ENCODE measurements at regions of chr22 and their contacts with region 1.

Region 1: GRCh38 chr22:45268958-45269844 is 15.5 kb upstream of the UPK3A start:
- DNase-seq: peak; percentile 92
- ATAC-seq: peak; percentile 98
- H3K4me3 ChIP-seq: peak overlapping the region; percentile 59 to 79 (median 66)
- H3K4me3 Mint-ChIP-seq: peak overlapping the region; percentile 89
- H3K27ac ChIP-seq: no peak overlapping the region
- H3K27ac Mint-ChIP-seq: peak overlapping the region; percentile 37
- H3K4me1 ChIP-seq: peaks cover 13 to 24% of the 10 kb centered on the region in 2 donors
- H3K4me1 Mint-ChIP-seq: peaks cover 24% of the 10 kb centered on the region
- H3K27me3 ChIP-seq: peaks cover 0 to 16% (median 7%) of the 10 kb centered on the region in 4 experiments
- H3K27me3 Mint-ChIP-seq: peaks cover 10% of the 10 kb centered on the region
- CTCF ChIP-seq: peak; percentile 82

Region 2: GRCh38 chr22:45163451-45164269 is 105.5 kb before region 1 on chr22 and contains the start of gene NUP50:
- CTCF ChIA-PET with region 1: no interaction called
- POLR2A ChIA-PET with region 1: interaction called, 3 read pairs
- intact Hi-C with region 1: loop called (anchors 5 kb)
- DNase-seq: peak; percentile 99
- ATAC-seq: peak; percentile 79
- H3K4me3 ChIP-seq: peak within 1 kb of the TSS; percentile 76 to 89 (median 82)
- H3K4me3 Mint-ChIP-seq: peak within 1 kb of the TSS; percentile 92
- H3K27ac ChIP-seq: peak within 1 kb of the TSS; percentile 81 to 94
- H3K27ac Mint-ChIP-seq: peak within 1 kb of the TSS; percentile 94
- H3K4me1 ChIP-seq: peaks cover 19 to 23% of the 10 kb centered on the region in 2 donors
- H3K4me1 Mint-ChIP-seq: peaks cover 47% of the 10 kb centered on the region
- H3K27me3 ChIP-seq: no peaks in the 10 kb centered on the region
- H3K27me3 Mint-ChIP-seq: no peaks in the 10 kb centered on the region
- CTCF ChIP-seq: no peak
- total RNA-seq, gene NUP50: 105 and 108 TPM in 2 replicates

Region 3: DNA sequence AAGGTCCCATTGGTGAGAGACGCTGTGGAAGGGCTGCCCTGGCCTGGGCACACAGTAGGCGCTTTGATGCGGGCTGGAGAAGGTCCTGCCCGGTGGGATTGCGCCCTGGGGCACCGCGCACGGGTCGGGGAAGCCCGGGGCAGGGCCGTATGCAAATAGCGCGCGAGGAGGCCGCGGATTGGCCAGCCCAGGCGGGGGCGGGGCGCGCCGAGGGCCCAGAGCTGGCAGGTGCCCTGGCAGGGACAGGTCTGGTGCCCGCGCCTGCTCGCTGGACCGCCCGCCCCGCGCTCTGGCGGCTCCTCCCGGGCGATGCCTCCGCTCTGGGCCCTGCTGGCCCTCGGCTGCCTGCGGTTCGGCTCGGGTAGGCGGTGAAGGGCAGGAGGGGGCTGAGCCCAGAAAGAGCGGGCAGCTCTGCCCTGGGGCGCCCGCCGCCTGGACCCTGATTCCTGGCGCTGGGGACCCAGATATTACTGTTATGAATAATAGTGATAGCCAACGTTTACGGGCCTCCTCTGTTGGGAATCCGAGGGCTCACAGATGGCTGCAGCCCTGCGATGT is 15.6 kb after region 1 on chr22 and contains the start of gene UPK3A:
- CTCF ChIA-PET with region 1: interaction called, 3 read pairs
- POLR2A ChIA-PET with region 1: interaction called, 4 read pairs
- intact Hi-C with region 1: loop called (anchors 1 kb)
- DNase-seq: peak; percentile 85
- ATAC-seq: peak; percentile 90
- H3K4me3 ChIP-seq: peak within 1 kb of the TSS; percentile 15 to 45 (median 31)
- H3K4me3 Mint-ChIP-seq: peak within 1 kb of the TSS; percentile 59
- H3K27ac ChIP-seq: no peak within 1 kb of the TSS
- H3K27ac Mint-ChIP-seq: peak within 1 kb of the TSS; percentile 53
- H3K4me1 ChIP-seq: peaks cover 40 to 56% of the 10 kb centered on the region in 2 donors
- H3K4me1 Mint-ChIP-seq: peaks cover 41% of the 10 kb centered on the region
- H3K27me3 ChIP-seq: no peaks in the 10 kb centered on the region
- H3K27me3 Mint-ChIP-seq: no peaks in the 10 kb centered on the region
- CTCF ChIP-seq: no peak
- total RNA-seq, gene UPK3A: not detected in 2 replicates

Region 4: GRCh38 chr22:45309472-45310227 is 40.4 kb after region 1 on chr22 and contains the start of gene FAM118A:
- CTCF ChIA-PET with region 1: no interaction called
- POLR2A ChIA-PET with region 1: interaction called, 6 read pairs
- intact Hi-C with region 1: loop called (anchors 1 kb)
- DNase-seq: peak; percentile 99
- ATAC-seq: peak; percentile 88
- H3K4me3 ChIP-seq: peak within 1 kb of the TSS; percentile 27 to 95 (median 80)
- H3K4me3 Mint-ChIP-seq: peak within 1 kb of the TSS; percentile 92
- H3K27ac ChIP-seq: peak within 1 kb of the TSS; percentile 73
- H3K27ac Mint-ChIP-seq: peak within 1 kb of the TSS; percentile 97
- H3K4me1 ChIP-seq: peaks cover 18 to 25% of the 10 kb centered on the region in 2 donors
- H3K4me1 Mint-ChIP-seq: peaks cover 36% of the 10 kb centered on the region
- H3K27me3 ChIP-seq: no peaks in the 10 kb centered on the region
- H3K27me3 Mint-ChIP-seq: no peaks in the 10 kb centered on the region
- CTCF ChIP-seq: no peak
- total RNA-seq, gene FAM118A: 66.5 and 74.6 TPM in 2 replicates

Region 5: DNA sequence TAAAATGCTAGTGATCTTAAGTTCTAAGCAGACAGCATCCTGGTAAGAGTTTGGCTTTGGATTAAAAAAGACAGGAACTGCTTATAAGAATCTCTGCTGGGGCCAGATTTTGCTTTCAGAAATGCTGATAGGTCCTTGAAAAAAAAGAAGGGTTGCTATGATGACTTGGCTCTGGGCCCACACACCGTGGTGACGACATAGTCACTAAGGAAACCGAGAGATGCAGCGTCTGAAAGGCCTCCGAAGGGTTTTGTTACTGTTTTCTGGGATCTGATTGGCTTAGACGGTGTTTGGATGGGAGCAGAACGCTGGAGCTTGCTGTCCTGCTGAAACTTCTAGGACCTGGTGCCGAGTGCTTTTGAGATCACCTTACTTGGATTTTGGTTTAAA is 49.0 kb after region 1 on chr22:
- CTCF ChIA-PET with region 1: no interaction called
- POLR2A ChIA-PET with region 1: no interaction called
- intact Hi-C with region 1: loop called (anchors 1 kb)
- DNase-seq: peak; percentile 89
- ATAC-seq: peak; percentile 88
- H3K4me3 ChIP-seq: peak overlapping the region in 4 of 5 experiments; percentile 9 to 17 (median 16)
- H3K4me3 Mint-ChIP-seq: peak overlapping the region; percentile 89
- H3K27ac ChIP-seq: peak overlapping the region; percentile 89 to 97
- H3K27ac Mint-ChIP-seq: peak overlapping the region; percentile 97
- H3K4me1 ChIP-seq: peaks cover 25 to 28% of the 10 kb centered on the region in 2 donors
- H3K4me1 Mint-ChIP-seq: peaks cover 44% of the 10 kb centered on the region
- H3K27me3 ChIP-seq: no peaks in the 10 kb centered on the region
- H3K27me3 Mint-ChIP-seq: no peaks in the 10 kb centered on the region
- CTCF ChIP-seq: no peak

Region 6: GRCh38 chr22:45376703-45377102 is 107.5 kb after region 1 on chr22:
- CTCF ChIA-PET with region 1: no interaction called
- POLR2A ChIA-PET with region 1: no interaction called
- intact Hi-C with region 1: no loop called
- DNase-seq: no peak
- ATAC-seq: no peak
- H3K4me3 ChIP-seq: no peak overlapping the region
- H3K4me3 Mint-ChIP-seq: no peak overlapping the region
- H3K27ac ChIP-seq: no peak overlapping the region
- H3K27ac Mint-ChIP-seq: no peak overlapping the region
- H3K4me1 ChIP-seq: no peaks in the 10 kb centered on the region
- H3K4me1 Mint-ChIP-seq: peaks cover 4% of the 10 kb centered on the region
- H3K27me3 ChIP-seq: no peaks in the 10 kb centered on the region
- H3K27me3 Mint-ChIP-seq: no peaks in the 10 kb centered on the region
- CTCF ChIP-seq: no peak

Region 7: GRCh38 chr22:45435544-45436139 is 166.4 kb after region 1 on chr22:
- CTCF ChIA-PET with region 1: interaction called, 28 read pairs
- POLR2A ChIA-PET with region 1: interaction called, 3 read pairs
- intact Hi-C with region 1: loop called (anchors 1 kb)
- DNase-seq: peak; percentile 87
- ATAC-seq: peak; percentile 95
- H3K4me3 ChIP-seq: no peak overlapping the region
- H3K4me3 Mint-ChIP-seq: no peak overlapping the region
- H3K27ac ChIP-seq: no peak overlapping the region
- H3K27ac Mint-ChIP-seq: peak overlapping the region; percentile 32
- H3K4me1 ChIP-seq: peaks cover 2 to 8% of the 10 kb centered on the region in 2 donors
- H3K4me1 Mint-ChIP-seq: peaks cover 16% of the 10 kb centered on the region
- H3K27me3 ChIP-seq: no peaks in the 10 kb centered on the region
- H3K27me3 Mint-ChIP-seq: peaks cover 4% of the 10 kb centered on the region
- CTCF ChIP-seq: peak; percentile 99

Region 8: GRCh38 chr22:46159777-46160176 is 890.6 kb after region 1 on chr22:
- CTCF ChIA-PET with region 1: no interaction called
- POLR2A ChIA-PET with region 1: no interaction called
- intact Hi-C with region 1: no loop called
- DNase-seq: no peak
- ATAC-seq: no peak
- H3K4me3 ChIP-seq: no peak overlapping the region
- H3K4me3 Mint-ChIP-seq: no peak overlapping the region
- H3K27ac ChIP-seq: no peak overlapping the region
- H3K27ac Mint-ChIP-seq: no peak overlapping the region
- H3K4me1 ChIP-seq: no peaks in the 10 kb centered on the region
- H3K4me1 Mint-ChIP-seq: peaks cover 2% of the 10 kb centered on the region
- H3K27me3 ChIP-seq: no peaks in the 10 kb centered on the region
- H3K27me3 Mint-ChIP-seq: no peaks in the 10 kb centered on the region
- CTCF ChIP-seq: no peak

Measured in B cell (primary cell).